ENCODE measurements at regions of chr15 and their contacts with region 1.

Region 1: DNA sequence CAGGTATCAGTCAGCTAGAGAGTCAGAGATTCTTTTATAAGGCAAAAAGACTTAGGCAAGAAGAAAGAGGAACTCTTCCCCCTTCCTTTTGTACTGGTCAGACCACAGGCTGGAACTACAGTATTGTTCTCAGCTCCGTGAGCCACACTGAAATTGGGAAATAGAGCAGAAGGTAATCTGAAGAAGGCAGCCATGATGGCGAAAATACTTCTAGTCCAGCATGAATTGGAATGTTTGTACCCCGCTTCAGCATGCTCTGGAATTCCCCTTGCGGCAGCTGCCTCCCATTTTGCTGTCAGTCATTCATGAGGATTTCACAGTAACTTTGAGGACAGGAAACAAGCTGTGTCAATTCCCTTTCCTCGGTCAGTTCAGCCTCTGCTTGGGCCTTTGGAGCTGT is 96.2 kb downstream of the CORO2B start:
- DNase-seq: no peak
- H3K4me3 ChIP-seq: no peak overlapping the region
- H3K4me3 Mint-ChIP-seq: no peak overlapping the region
- H3K27ac ChIP-seq: no peak overlapping the region
- H3K27ac Mint-ChIP-seq: peak overlapping the region in 1 of 8 donors; percentile 36
- H3K4me1 ChIP-seq: no peaks in the 10 kb centered on the region
- H3K4me1 Mint-ChIP-seq: peaks cover 2 to 4% (median 4%) of the 10 kb centered on the region in 3 donors
- H3K27me3 ChIP-seq: no peaks in the 10 kb centered on the region
- H3K27me3 Mint-ChIP-seq: peaks cover 19 to 34% of the 10 kb centered on the region in 2 donors

Region 2: DNA sequence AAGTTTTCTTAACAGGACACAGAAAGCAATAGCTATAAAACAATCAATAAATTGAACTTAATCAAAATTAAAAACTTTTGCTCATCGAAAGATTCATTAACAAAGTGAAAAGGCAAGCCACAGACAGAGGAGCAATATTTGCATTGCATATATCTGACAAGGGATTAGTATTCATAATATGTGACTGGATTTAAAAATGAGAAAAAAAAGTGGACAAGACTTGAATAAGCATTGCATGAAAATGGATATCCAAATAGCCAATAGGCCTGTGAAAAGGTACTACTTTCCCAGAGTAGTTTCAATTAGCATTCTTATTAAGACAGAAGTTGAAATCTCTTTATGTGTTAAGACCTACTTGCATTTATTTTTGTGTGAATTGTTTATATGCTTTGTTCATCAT is 11.4 kb before region 1 on chr15:
- CTCF ChIA-PET with region 1: interaction called, 12 read pairs
- POLR2A ChIA-PET with region 1: no interaction called
- DNase-seq: no peak
- H3K4me3 ChIP-seq: no peak overlapping the region
- H3K4me3 Mint-ChIP-seq: no peak overlapping the region
- H3K27ac ChIP-seq: no peak overlapping the region
- H3K27ac Mint-ChIP-seq: no peak overlapping the region
- H3K4me1 ChIP-seq: no peaks in the 10 kb centered on the region
- H3K4me1 Mint-ChIP-seq: no peaks in the 10 kb centered on the region
- H3K27me3 ChIP-seq: no peaks in the 10 kb centered on the region
- H3K27me3 Mint-ChIP-seq: peaks cover 10 to 34% of the 10 kb centered on the region in 2 donors

Region 3: GRCh38 chr15:69290346-69291164 is 615.6 kb after region 1 on chr15:
- CTCF ChIA-PET with region 1: no interaction called
- POLR2A ChIA-PET with region 1: no interaction called
- DNase-seq: no peak
- H3K4me3 ChIP-seq: no peak overlapping the region
- H3K4me3 Mint-ChIP-seq: no peak overlapping the region
- H3K27ac ChIP-seq: no peak overlapping the region
- H3K27ac Mint-ChIP-seq: no peak overlapping the region
- H3K4me1 ChIP-seq: no peaks in the 10 kb centered on the region
- H3K4me1 Mint-ChIP-seq: no peaks in the 10 kb centered on the region
- H3K27me3 ChIP-seq: no peaks in the 10 kb centered on the region
- H3K27me3 Mint-ChIP-seq: peaks cover 4% of the 10 kb centered on the region in 2 donors